ENCODE measurements at regions of chr6 and their contacts with region 1.

Region 1: DNA sequence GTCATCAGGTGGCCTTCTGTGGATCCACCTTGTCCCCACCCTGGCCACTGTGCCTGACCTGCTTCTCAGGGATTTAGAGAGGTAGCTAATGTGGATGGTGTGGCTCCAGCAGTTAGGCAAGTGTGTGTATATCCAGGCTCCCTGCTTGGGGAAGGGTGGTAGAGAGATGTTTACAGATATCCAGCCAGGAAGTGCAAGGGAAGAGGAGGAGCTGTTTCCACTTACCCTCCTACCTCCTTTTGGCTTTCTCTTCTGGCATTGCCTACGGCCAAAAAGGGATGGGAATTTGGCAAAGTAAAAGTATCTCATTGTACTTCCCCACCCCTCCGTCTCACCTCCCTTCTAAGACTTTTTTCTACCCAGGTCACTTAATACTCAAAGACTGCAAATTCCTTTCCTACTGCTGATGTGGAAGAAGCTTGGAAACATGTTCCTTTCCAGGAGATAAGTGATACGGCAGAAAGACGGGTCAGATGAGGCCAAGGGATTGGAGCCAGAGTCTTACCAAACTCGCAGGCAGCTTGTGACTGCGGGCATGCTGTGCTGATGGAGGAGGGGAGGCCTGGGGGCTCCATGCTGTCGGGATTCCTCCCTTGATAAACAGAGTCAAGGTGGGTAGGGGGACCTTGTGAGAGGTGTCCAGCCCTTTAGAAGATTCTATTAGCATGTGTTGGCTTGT is 253.4 kb downstream of the PRL start:
- DNase-seq: peak; percentile 44 to 80
- ATAC-seq: peak; percentile 91 to 95
- H3K4me3 ChIP-seq: peak overlapping the region in 3 of 4 donors; percentile 11 to 32 (median 32)
- H3K27ac ChIP-seq: peak overlapping the region; percentile 66 to 73 (median 68)
- H3K4me1 ChIP-seq: peaks cover 20 to 26% of the 10 kb centered on the region in 2 donors
- H3K27me3 ChIP-seq: no peaks in the 10 kb centered on the region
- CTCF ChIP-seq: no peak
- POLR2A ChIP-seq: no peak

Region 2: GRCh38 chr6:22098601-22099031 is 55.2 kb after region 1 on chr6:
- in situ Hi-C with region 1: no loop called
- intact Hi-C with region 1: no loop called
- DNase-seq: no peak
- ATAC-seq: no peak
- H3K4me3 ChIP-seq: no peak overlapping the region
- H3K27ac ChIP-seq: no peak overlapping the region
- H3K4me1 ChIP-seq: no peaks in the 10 kb centered on the region
- H3K27me3 ChIP-seq: no peaks in the 10 kb centered on the region
- CTCF ChIP-seq: no peak
- POLR2A ChIP-seq: no peak

Region 3: GRCh38 chr6:22119500-22119899 is 76.1 kb after region 1 on chr6:
- in situ Hi-C with region 1: no loop called
- intact Hi-C with region 1: no loop called
- DNase-seq: no peak
- ATAC-seq: no peak
- H3K4me3 ChIP-seq: no peak overlapping the region
- H3K27ac ChIP-seq: no peak overlapping the region
- H3K4me1 ChIP-seq: no peaks in the 10 kb centered on the region
- H3K27me3 ChIP-seq: no peaks in the 10 kb centered on the region
- CTCF ChIP-seq: no peak
- POLR2A ChIP-seq: no peak

Region 4: DNA sequence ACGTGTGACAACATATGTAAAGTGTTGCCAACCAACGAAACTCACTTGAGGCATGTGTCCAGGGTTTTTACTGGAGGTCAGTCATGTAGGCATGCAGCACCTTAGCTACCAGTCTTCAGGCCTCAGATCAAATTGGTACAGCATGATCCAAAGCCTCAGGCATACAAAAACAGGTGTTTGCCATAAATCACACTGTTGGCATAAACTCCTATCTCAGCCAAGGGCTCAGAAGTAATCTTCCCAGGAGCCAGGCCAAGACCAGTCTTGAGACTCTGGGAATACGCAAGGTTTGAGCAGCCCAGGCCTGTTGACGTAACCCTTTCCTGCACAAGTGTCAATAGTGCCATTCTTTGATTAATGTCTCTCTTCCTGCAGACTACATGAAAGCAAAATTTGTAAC is 89.9 kb after region 1 on chr6:
- in situ Hi-C with region 1: no loop called
- intact Hi-C with region 1: loop called (anchors 2 kb)
- DNase-seq: peak; percentile 70 to 75
- ATAC-seq: peak; percentile 96 to 98
- H3K4me3 ChIP-seq: no peak overlapping the region
- H3K27ac ChIP-seq: peak overlapping the region; percentile 26 to 69 (median 62)
- H3K4me1 ChIP-seq: peaks cover 5 to 8% of the 10 kb centered on the region in 2 donors
- H3K27me3 ChIP-seq: no peaks in the 10 kb centered on the region
- CTCF ChIP-seq: no peak
- POLR2A ChIP-seq: no peak

Region 5: DNA sequence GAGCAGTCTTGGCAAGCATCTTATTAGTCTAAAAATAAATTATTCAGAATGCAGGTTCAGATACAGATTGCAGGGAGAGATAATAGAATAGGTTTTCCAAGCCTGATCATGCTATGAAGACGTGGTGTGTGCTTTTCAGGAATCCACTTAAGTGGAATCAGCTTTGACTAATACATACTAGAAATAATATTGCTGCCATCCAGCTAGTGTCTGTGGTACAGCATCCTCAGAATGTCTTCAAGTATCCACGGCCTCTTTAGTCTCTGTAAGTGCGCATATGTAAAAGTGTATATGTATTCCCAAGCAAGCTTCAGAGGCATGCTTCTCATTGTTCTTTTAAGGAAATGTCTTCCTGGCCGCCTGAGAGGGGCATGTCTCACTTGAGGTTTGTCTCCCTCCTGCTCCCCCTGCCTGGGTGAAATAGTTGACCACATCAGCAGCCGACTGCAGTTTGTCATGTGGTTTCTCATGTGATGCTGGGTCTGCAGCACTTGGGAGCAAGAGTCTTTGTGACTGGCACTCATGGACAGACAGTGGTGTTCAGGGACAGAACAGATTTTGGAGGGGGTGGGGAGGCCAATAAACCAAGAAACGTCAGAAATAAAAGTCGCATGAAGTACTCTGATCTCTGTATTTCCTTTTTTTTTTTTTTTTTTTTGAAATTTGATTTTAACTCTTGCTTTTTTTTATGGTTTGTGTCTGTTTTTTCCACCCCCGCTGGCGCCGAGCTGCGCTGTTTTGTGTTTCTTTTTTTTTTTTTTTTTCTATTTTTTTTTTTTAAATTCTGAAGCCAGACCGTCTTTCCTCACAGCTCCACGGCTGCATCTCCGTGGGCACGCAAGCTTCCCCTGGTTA is 102.6 kb after region 1 on chr6:
- in situ Hi-C with region 1: no loop called
- intact Hi-C with region 1: loop called (anchors 5 kb)
- DNase-seq: no peak
- ATAC-seq: no peak
- H3K4me3 ChIP-seq: peak overlapping the region; percentile 52 to 69 (median 54)
- H3K27ac ChIP-seq: no peak overlapping the region
- H3K4me1 ChIP-seq: peaks cover 55 to 59% of the 10 kb centered on the region in 2 donors
- H3K27me3 ChIP-seq: no peaks in the 10 kb centered on the region
- CTCF ChIP-seq: no peak
- POLR2A ChIP-seq: no peak

Region 6: DNA sequence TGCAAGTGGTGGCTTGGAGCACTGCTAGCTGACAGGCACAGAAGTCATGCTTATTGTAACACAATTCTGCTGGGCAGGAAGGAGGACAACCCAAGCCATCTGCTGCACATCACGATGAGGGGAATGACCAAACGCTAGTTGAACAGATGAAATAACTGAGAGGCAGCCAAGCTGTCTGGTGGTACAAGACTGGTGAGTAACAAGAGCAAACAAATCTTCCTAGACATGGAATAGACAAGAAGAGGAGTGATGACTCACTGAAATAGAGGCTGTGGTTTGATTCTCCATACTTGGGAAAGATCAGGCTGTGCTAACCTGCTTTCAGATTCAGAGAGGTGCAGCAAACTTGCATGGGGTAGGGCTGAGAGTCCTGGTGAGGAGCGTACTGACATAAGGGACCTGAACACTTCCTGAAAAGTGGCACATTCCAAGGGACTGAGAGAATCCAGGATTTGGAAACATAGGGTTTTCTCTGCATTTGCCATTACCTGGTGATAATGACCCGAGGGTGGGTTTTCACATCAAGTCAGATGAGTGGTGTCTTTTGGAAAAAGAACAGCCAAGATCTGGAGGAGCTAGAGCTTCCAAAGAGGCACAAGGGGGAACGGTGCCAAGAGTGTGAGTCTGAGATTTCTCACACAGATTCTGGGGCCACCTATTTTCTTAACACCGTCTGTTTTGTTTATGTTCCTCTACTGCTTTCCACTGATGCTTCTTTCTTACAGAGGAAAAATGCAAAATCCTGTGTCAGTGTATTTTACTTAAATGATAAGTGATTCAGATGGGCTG is 193.4 kb after region 1 on chr6:
- in situ Hi-C with region 1: no loop called
- intact Hi-C with region 1: no loop called
- DNase-seq: no peak
- ATAC-seq: no peak
- H3K4me3 ChIP-seq: no peak overlapping the region
- H3K27ac ChIP-seq: no peak overlapping the region
- H3K4me1 ChIP-seq: no peaks in the 10 kb centered on the region
- H3K27me3 ChIP-seq: no peaks in the 10 kb centered on the region
- CTCF ChIP-seq: no peak
- POLR2A ChIP-seq: no peak